CD14-positive monocyte (primary cell): ENCODE measurements at regions of chr7 and their contacts with region 1.

Region 1: GRCh38 chr7:25565949-25566348 is 337.7 kb upstream of the NPVF start:
- DNase-seq: peak; percentile 50 to 71 (median 69)
- H3K4me3 ChIP-seq: no peak overlapping the region
- H3K4me3 Mint-ChIP-seq: no peak overlapping the region
- H3K27ac ChIP-seq: no peak overlapping the region
- H3K27ac Mint-ChIP-seq: no peak overlapping the region
- H3K4me1 ChIP-seq: no peaks in the 10 kb centered on the region
- H3K4me1 Mint-ChIP-seq: peaks cover 2% of the 10 kb centered on the region
- H3K27me3 ChIP-seq: no peaks in the 10 kb centered on the region
- H3K27me3 Mint-ChIP-seq: peaks cover 0 to 7% (median 2%) of the 10 kb centered on the region in 3 donors
- CTCF ChIP-seq: peak; percentile 100

Region 2: GRCh38 chr7:25389489-25390106 is 176.4 kb before region 1 on chr7:
- intact Hi-C with region 1: loop called in 1 of 2 experiments (anchors 10 kb)
- DNase-seq: peak in 1 of 3 donors; percentile 5
- H3K4me3 ChIP-seq: no peak overlapping the region
- H3K4me3 Mint-ChIP-seq: no peak overlapping the region
- H3K27ac ChIP-seq: no peak overlapping the region
- H3K27ac Mint-ChIP-seq: no peak overlapping the region
- H3K4me1 ChIP-seq: no peaks in the 10 kb centered on the region
- H3K4me1 Mint-ChIP-seq: no peaks in the 10 kb centered on the region
- H3K27me3 ChIP-seq: peaks cover 3 to 5% of the 10 kb centered on the region in 2 donors
- H3K27me3 Mint-ChIP-seq: peaks cover 4 to 10% (median 8%) of the 10 kb centered on the region in 3 donors
- CTCF ChIP-seq: peak; percentile 20